Right cardiac atrium (tissue), 5 donors: ENCODE measurements at regions of chr2 and their contacts with region 1.

Region 1: GRCh38 chr2:207541933-207542332 is 12.2 kb downstream of the CREB1 start:
- DNase-seq: no peak
- ATAC-seq: no peak
- H3K4me3 ChIP-seq: no peak overlapping the region
- H3K27ac ChIP-seq: no peak overlapping the region
- H3K4me1 ChIP-seq: no peaks in the 10 kb centered on the region
- H3K27me3 ChIP-seq: no peaks in the 10 kb centered on the region

Region 2: DNA sequence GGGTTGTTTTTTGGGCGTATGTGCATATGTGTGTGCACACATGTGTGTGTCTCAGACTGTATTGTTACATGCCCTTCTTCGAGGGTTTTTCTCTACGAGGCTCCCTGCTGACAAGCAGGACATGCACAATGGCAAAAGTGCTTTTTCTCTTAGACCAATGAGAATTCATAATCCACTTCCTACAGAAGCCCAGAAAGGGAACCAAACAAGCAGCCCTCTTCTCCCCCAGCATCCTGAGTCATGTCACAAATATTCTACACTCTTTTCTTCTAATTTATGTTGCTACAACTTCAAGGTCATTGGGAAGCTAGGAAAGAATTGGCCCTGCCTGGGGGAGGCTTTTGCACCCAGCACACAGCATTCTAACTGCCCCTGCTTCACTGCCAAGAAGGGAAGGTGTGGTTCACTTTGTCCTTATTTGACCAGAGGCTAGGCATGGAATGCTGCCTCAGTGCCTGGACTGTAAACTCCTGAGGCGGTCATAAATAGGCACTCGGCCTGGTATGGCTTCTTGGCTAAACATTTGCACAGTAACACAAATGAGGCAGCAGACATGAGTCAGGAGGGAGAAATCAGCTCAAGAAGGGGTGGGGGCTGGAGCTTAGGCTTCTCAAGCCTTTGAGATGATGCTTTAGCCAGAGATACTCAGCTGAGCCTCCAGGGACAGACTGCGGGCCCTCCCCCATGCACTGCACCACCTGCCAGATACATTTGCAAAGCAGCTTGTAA is 283.5 kb before region 1 on chr2:
- intact Hi-C with region 1: no loop called
- DNase-seq: peak; percentile 57 to 80 (median 74)
- ATAC-seq: peak; percentile 88 to 92
- H3K4me3 ChIP-seq: no peak overlapping the region
- H3K27ac ChIP-seq: peak overlapping the region; percentile 71
- H3K4me1 ChIP-seq: peaks cover 18% of the 10 kb centered on the region
- H3K27me3 ChIP-seq: no peaks in the 10 kb centered on the region

Region 3: DNA sequence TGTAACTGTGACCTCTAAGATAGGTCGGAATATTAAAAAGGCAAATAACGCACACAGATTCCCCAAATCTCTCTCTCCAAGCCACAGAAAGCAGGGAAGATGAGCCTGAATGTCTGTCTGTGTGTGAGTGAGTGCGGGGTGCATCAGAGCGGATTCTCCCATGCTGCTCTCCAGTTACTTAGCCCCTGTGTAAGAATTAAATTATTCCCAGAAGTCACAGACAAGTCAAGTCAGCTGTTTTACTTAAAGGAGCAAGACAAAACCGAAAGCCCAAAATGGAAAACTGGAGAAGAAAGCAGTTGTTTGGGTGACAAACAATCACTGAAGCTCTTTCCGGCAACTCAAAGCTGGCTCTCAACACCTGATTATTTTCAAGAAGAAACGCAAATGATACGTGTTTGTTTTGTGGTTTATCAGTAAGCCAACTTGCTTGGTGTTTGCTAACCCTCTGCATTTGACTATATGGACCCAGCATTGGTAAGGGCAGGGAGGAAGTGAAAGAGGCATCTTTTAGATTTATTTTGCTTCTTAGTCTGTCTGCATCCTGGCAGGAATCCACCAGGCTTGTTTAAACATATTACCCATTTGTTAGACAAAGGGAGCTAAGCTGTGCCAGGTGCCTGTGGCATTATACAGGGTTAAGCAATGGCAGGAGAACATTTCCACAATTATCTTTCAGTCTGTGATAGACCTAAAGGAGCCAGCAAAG is 133.7 kb before region 1 on chr2:
- intact Hi-C with region 1: no loop called
- DNase-seq: no peak
- ATAC-seq: no peak
- H3K4me3 ChIP-seq: no peak overlapping the region
- H3K27ac ChIP-seq: no peak overlapping the region
- H3K4me1 ChIP-seq: peaks cover 9% of the 10 kb centered on the region
- H3K27me3 ChIP-seq: no peaks in the 10 kb centered on the region

Region 4: GRCh38 chr2:207561386-207562080 is 19.6 kb after region 1 on chr2:
- intact Hi-C with region 1: loop called in 1 of 4 experiments (anchors 2 kb)
- DNase-seq: no peak
- ATAC-seq: peak; percentile 25 to 38
- H3K4me3 ChIP-seq: no peak overlapping the region
- H3K27ac ChIP-seq: no peak overlapping the region
- H3K4me1 ChIP-seq: peaks cover 2% of the 10 kb centered on the region
- H3K27me3 ChIP-seq: no peaks in the 10 kb centered on the region